Panc1 (cell line): ENCODE measurements at regions of chr16 and their contacts with region 1.

Region 1: GRCh38 chr16:2415085-2415484 is 14.2 kb upstream of the CCNF start:
- DNase-seq: no peak
- ATAC-seq: no peak
- H3K4me3 ChIP-seq: no peak overlapping the region
- H3K27ac ChIP-seq: no peak overlapping the region
- H3K4me1 ChIP-seq: peaks cover 4% of the 10 kb centered on the region; the same call in 1 of the 2 replicates
- H3K27me3 ChIP-seq: peaks cover 3% of the 10 kb centered on the region; the same call in 1 of the 2 replicates
- CTCF ChIP-seq: no peak

Region 2: GRCh38 chr16:2365397-2366294 is 49.4 kb before region 1 on chr16:
- CTCF ChIA-PET with region 1: interaction called, 11 read pairs
- POLR2A ChIA-PET with region 1: no interaction called
- in situ Hi-C with region 1: no loop called
- intact Hi-C with region 1: no loop called
- DNase-seq: no peak
- ATAC-seq: peak; percentile 58; the same call in 1 of the 2 replicates
- H3K4me3 ChIP-seq: no peak overlapping the region
- H3K27ac ChIP-seq: no peak overlapping the region
- H3K4me1 ChIP-seq: no peaks in the 10 kb centered on the region
- H3K27me3 ChIP-seq: peaks cover 10% of the 10 kb centered on the region; the same call in 1 of the 2 replicates
- CTCF ChIP-seq: no peak

Region 3: GRCh38 chr16:2429034-2429770 is 14.1 kb after region 1 on chr16 and contains the start of gene CCNF:
- CTCF ChIA-PET with region 1: no interaction called
- POLR2A ChIA-PET with region 1: interaction called, 23 read pairs
- in situ Hi-C with region 1: no loop called
- intact Hi-C with region 1: no loop called
- DNase-seq: peak; percentile 72
- ATAC-seq: peak; percentile 94
- H3K4me3 ChIP-seq: peak within 1 kb of the TSS; percentile 76 to 80
- H3K27ac ChIP-seq: peak within 1 kb of the TSS; percentile 91
- H3K4me1 ChIP-seq: peaks cover 19% of the 10 kb centered on the region
- H3K27me3 ChIP-seq: no peaks in the 10 kb centered on the region
- CTCF ChIP-seq: no peak
- total RNA-seq, gene CCNF: 35.8 TPM

Region 4: DNA sequence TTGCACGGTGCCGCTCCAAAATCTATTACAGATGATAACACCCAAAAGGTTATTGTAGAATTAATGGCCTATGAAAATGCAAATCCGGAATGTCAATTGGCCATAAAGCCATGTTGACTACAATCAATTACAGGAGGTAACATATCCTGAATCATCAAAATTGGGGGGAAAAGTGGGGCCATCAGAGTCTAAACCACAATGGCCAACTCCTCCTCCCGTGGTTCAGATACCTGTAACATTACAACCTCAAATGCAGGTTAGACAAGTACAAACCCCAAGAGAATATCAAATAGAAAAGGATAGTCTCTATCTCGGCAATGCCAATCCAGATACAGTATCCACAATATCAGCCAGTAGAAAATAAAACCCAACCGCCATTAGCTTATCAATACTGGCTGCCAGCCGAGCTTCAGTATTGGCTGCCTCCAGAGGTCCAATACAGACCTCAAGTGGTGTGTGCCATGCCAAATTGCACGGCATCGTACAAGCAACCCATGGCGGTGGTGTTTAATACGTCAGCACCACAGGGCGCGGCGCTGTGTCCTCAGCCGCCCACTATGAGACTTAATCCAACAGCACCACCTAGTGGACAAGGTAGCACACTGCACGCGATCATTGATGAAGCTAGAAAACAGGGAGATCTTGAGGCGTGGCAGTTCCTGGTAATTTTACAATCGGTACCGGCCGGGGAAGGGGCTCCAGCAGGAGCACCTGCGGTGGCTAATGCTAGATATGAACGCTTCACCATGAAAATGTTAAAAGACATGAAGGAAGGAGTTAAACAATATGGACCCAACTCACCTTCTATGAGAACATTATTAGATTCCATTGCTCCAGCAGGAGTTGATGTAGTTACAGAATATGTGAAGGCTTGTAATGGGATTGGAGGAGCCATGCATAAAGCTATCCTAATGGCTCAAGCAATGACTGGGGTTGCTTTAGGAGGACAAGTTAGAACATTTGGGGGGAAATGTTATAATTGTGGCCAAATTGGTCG is 511.9 kb after region 1 on chr16:
- CTCF ChIA-PET with region 1: no interaction called
- POLR2A ChIA-PET with region 1: no interaction called
- in situ Hi-C with region 1: no loop called
- intact Hi-C with region 1: no loop called
- DNase-seq: no peak
- ATAC-seq: peak; percentile 91
- H3K4me3 ChIP-seq: peak overlapping the region in 1 of 2 experiments; percentile 37; a peak in 2 of 4 replicates
- H3K27ac ChIP-seq: no peak overlapping the region
- H3K4me1 ChIP-seq: no peaks in the 10 kb centered on the region
- H3K27me3 ChIP-seq: no peaks in the 10 kb centered on the region
- CTCF ChIP-seq: peak; percentile 96

Region 5: DNA sequence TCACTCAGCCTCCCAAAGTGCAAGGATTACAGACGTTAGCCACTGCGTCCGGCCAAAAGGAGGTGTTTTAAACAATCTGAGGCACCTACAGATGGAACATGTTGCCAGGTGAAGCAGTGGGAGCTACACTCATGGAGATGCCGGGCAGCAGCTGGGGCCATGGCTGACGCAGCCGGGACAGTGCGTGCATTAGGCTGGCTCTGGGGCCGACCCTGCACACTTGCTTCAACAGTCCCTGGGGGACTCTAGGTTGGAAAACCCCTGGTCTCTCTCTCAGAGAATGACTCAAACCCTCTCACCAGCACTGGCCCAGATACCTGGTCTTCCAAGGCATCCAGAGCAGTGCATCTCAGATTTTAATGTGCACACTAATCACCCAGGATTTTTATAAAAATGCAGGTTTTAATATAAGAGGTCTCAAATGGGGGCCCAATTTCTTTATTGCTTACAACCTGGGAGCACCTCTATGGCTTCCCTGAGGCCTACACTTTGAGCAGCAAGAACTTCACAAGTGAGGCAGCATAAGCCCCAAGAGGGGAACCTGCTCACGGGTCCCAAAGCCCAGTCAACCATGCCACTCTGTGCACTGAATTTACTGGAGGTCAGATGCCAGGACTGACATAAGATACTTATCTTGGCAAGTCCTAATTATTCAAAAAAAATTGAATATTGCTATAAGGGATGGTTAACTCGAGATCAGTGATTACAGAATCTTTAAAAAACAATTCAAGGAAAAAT is 1373.0 kb after region 1 on chr16:
- CTCF ChIA-PET with region 1: interaction called, 13 read pairs
- POLR2A ChIA-PET with region 1: no interaction called
- in situ Hi-C with region 1: no loop called
- intact Hi-C with region 1: no loop called
- DNase-seq: no peak
- ATAC-seq: 0 out of 2 replicates have a peak, but pooled peaks have one; percentile 50
- H3K4me3 ChIP-seq: no peak overlapping the region
- H3K27ac ChIP-seq: no peak overlapping the region
- H3K4me1 ChIP-seq: no peaks in the 10 kb centered on the region
- H3K27me3 ChIP-seq: no peaks in the 10 kb centered on the region
- CTCF ChIP-seq: no peak